ENCODE measurements at regions of chr11 and their contacts with region 1.

Region 1: GRCh38 chr11:62905927-62906531 is 15.1 kb downstream of the CHRM1 start:
- DNase-seq: no peak
- H3K4me3 ChIP-seq: no peak overlapping the region
- CTCF ChIP-seq: peak; percentile 98

Region 2: DNA sequence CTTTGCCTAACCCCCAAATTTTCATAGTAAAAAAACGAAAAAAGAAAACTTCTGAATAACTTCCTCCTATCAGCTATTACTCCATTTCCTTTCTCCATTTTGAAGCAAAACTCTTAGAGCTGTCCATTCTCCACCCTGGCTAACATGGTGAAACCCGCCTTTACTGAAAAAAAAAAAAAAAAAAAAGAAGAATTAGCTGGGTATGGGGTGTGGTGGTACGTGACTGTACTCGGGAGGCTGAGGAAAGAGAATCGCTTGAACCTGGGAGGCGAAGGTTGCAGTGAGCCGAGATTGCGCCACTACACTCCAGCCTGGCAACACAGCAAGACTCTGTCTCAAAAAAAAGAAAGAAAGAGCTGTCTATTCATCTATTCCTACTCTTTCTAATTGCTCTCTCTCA is 89.5 kb before region 1 on chr11:
- CTCF ChIA-PET with region 1: no interaction called
- POLR2A ChIA-PET with region 1: no interaction called
- DNase-seq: no peak
- H3K4me3 ChIP-seq: no peak overlapping the region
- CTCF ChIP-seq: no peak

Region 3: GRCh38 chr11:62841361-62842184 is 64.5 kb before region 1 on chr11:
- CTCF ChIA-PET with region 1: no interaction called
- POLR2A ChIA-PET with region 1: no interaction called
- DNase-seq: peak; percentile 99
- H3K4me3 ChIP-seq: peak overlapping the region; percentile 49
- CTCF ChIP-seq: no peak

Region 4: DNA sequence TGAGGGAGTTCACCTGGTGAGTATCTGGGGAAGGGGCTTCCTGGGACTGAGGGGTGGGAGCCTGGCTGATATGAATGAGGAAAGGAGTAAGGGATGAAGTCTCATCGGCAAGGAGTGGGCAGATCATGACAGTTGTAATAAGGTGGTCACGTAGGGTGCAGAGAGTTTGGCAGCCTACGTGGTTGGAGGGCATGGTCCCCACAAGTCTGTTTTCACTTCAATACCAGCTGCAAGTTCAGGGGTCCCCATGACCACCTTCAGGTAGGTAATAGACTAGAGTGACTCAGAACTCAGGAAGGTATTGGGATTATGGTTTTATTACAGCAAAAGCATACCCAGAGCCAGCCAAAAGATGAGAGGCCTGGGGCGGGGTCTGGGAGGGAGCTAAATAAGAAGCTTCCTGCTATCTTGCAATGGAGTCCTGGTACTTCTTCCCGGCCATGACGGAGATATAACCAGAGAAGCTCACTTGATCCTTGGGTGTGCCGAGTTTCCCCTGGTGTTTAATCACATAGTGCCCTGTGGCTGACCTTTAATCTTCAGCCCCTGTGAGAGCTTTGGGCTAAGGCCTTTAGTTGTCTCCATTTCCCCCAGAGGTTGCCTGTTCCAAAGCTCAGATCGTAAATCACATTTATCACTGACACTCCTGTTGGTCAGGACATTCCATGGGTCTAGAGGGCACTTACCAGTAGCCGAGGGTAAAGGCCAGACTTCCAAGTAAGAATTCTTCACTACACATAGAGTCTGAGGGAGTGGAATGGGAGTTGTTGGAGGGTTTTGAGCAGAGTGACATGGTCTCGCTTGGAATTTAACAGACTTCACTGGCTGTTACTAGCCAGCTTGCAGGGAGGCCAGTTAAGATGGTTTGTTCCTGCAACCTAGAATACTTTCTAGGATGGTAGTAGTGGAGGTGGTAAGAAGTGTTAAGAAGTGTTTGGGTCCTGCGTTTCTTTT is 16.3 kb before region 1 on chr11:
- CTCF ChIA-PET with region 1: interaction called, 23 read pairs
- POLR2A ChIA-PET with region 1: interaction called, 3 read pairs
- DNase-seq: no peak
- H3K4me3 ChIP-seq: no peak overlapping the region
- CTCF ChIP-seq: no peak

Region 5: GRCh38 chr11:62931499-62932278 is 25.7 kb after region 1 on chr11:
- CTCF ChIA-PET with region 1: interaction called, 18 read pairs
- POLR2A ChIA-PET with region 1: no interaction called
- DNase-seq: no peak
- H3K4me3 ChIP-seq: no peak overlapping the region
- CTCF ChIP-seq: no peak

Region 6: DNA sequence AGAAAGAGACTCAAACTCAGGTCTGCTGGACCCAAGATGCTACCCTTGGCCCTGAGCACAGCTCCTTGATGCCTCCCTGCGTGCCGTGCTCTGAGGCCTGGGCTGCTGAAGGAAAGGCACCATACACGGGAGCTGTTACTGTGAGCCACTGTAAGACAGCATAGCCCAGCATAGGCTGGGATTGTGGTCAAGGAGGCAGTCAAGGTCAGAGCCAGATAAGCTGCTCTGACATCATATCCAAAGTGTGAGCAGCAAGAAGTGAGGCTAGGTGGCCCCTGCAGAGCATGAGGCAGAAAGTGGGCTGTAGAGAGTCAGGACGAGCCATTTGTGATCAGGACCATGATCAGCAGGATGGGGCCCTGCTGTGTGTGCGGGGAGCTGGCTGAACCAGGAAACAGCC is 101.9 kb after region 1 on chr11:
- CTCF ChIA-PET with region 1: interaction called, 23 read pairs
- POLR2A ChIA-PET with region 1: no interaction called
- DNase-seq: no peak
- H3K4me3 ChIP-seq: no peak overlapping the region
- CTCF ChIP-seq: no peak

Region 7: GRCh38 chr11:63023841-63024648 is 118.0 kb after region 1 on chr11:
- CTCF ChIA-PET with region 1: interaction called, 669 read pairs
- POLR2A ChIA-PET with region 1: no interaction called
- DNase-seq: peak; percentile 16
- H3K4me3 ChIP-seq: no peak overlapping the region
- CTCF ChIP-seq: peak; percentile 98

Region 8: DNA sequence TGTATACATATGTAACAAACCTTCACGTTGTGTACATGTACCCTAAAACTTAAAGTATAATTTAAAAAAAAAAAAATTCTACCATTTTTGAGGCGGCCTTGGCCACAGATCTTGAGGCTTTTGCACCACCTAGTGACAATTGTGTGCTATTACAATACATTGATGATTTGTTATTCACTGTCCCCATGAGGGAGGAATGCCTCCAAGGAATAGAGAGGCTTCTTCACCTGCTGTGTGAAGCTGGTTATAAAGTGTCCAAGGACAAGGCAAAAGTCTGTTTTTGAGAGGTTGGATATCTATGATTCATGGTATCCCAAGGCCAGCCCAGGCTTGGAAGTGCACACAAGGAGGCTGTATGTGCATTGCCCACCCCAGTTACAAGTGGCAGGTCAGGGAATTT is 306.7 kb after region 1 on chr11:
- CTCF ChIA-PET with region 1: interaction called, 28 read pairs
- POLR2A ChIA-PET with region 1: no interaction called
- DNase-seq: no peak
- H3K4me3 ChIP-seq: no peak overlapping the region
- CTCF ChIP-seq: peak; percentile 33